CD4-positive, alpha-beta T cell (primary cell): ENCODE measurements at regions of chr6 and their contacts with region 1.

Region 1: DNA sequence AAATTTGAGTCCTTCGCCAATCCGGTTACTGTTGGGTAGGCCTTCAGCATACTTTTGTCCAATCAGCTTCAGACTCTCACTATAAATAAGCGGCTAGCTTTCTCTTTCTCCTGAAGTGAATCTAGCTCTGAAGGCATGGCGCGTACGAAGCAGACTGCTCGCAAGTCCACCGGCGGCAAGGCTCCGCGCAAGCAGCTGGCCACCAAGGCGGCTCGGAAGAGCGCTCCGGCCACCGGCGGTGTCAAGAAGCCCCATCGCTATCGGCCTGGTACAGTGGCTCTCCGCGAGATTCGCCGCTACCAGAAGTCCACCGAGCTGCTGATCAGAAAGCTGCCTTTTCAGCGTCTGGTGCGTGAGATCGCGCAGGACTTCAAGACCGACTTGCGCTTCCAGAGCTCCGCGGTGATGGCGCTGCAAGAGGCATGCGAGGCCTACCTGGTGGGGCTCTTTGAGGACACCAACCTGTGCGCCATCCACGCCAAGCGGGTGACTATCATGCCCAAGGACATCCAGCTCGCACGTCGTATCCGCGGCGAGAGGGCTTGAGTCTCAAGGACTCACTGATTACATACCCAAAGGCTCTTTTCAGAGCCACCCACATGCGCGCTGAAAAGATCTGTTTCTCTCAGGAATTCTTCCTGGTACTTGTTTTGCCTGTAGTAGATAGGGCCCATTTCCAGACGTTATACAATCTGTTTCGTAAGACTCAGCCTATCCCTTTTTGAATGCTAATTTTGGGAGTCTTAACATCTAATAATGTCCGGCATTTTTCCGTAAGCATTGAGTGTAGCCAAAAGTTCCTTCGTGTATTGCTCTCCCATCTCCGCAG is 102.0 kb downstream of the OR2B2 start:
- DNase-seq: peak; percentile 63 to 98 (median 75)
- ATAC-seq: peak; percentile 61
- H3K4me3 ChIP-seq: peak overlapping the region; percentile 64
- H3K4me3 Mint-ChIP-seq: peak overlapping the region; percentile 95
- H3K27ac ChIP-seq: peak overlapping the region; percentile 69 to 81
- H3K27ac Mint-ChIP-seq: peak overlapping the region; percentile 96
- H3K4me1 ChIP-seq: peaks cover 39% of the 10 kb centered on the region
- H3K4me1 Mint-ChIP-seq: peaks cover 68% of the 10 kb centered on the region
- H3K27me3 ChIP-seq: no peaks in the 10 kb centered on the region
- H3K27me3 Mint-ChIP-seq: no peaks in the 10 kb centered on the region
- CTCF ChIP-seq: no peak

Region 2: GRCh38 chr6:26045065-26045927 is 1764.9 kb before region 1 on chr6:
- CTCF ChIA-PET with region 1: no interaction called
- POLR2A ChIA-PET with region 1: interaction called, 28 read pairs
- intact Hi-C with region 1: no loop called
- DNase-seq: peak; percentile 49 to 96 (median 74)
- ATAC-seq: peak; percentile 55
- H3K4me3 ChIP-seq: peak overlapping the region; percentile 70
- H3K4me3 Mint-ChIP-seq: peak overlapping the region; percentile 97
- H3K27ac ChIP-seq: peak overlapping the region; percentile 71 to 91
- H3K27ac Mint-ChIP-seq: peak overlapping the region; percentile 94
- H3K4me1 ChIP-seq: peaks cover 21% of the 10 kb centered on the region
- H3K4me1 Mint-ChIP-seq: peaks cover 28% of the 10 kb centered on the region
- H3K27me3 ChIP-seq: no peaks in the 10 kb centered on the region
- H3K27me3 Mint-ChIP-seq: no peaks in the 10 kb centered on the region
- CTCF ChIP-seq: no peak

Region 3: DNA sequence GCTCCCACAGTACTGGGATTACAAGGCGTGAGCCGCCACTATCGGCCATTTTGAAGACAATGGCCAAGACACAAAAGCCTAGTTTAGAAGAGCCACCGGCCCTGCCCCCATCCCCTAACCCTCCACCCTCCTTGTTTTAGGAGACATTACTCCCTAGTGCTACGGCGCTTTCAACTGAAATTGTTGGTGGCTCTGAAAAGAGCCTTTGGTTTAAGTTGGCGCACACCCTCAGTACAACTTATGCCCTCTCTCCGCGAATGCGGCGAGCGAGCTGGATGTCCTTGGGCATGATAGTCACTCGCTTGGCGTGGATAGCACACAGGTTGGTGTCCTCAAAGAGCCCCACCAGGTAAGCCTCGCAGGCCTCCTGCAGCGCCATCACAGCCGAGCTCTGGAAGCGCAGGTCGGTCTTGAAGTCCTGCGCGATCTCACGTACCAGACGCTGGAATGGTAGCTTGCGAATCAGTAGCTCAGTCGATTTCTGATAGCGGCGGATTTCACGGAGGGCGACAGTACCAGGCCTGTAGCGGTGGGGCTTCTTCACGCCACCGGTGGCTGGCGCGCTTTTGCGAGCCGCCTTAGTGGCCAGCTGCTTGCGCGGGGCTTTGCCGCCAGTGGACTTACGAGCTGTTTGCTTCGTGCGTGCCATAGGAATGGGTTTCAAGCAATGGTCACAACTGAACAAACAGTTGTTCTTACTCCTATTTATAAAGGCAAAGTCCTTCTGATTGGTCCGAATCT is 1560.0 kb before region 1 on chr6:
- CTCF ChIA-PET with region 1: interaction called, 3 read pairs
- POLR2A ChIA-PET with region 1: interaction called, 19 read pairs
- intact Hi-C with region 1: no loop called
- DNase-seq: peak; percentile 64 to 93 (median 74)
- ATAC-seq: peak; percentile 78
- H3K4me3 ChIP-seq: peak overlapping the region; percentile 75
- H3K4me3 Mint-ChIP-seq: peak overlapping the region; percentile 97
- H3K27ac ChIP-seq: peak overlapping the region; percentile 72 to 80
- H3K27ac Mint-ChIP-seq: peak overlapping the region; percentile 88
- H3K4me1 ChIP-seq: peaks cover 29% of the 10 kb centered on the region
- H3K4me1 Mint-ChIP-seq: peaks cover 44% of the 10 kb centered on the region
- H3K27me3 ChIP-seq: no peaks in the 10 kb centered on the region
- H3K27me3 Mint-ChIP-seq: no peaks in the 10 kb centered on the region
- CTCF ChIP-seq: no peak

Region 4: GRCh38 chr6:27479319-27480182 is 330.6 kb before region 1 on chr6:
- CTCF ChIA-PET with region 1: no interaction called
- POLR2A ChIA-PET with region 1: interaction called, 26 read pairs
- intact Hi-C with region 1: no loop called
- DNase-seq: peak; percentile 82 to 94 (median 90)
- ATAC-seq: peak; percentile 71
- H3K4me3 ChIP-seq: peak overlapping the region; percentile 62
- H3K4me3 Mint-ChIP-seq: no peak overlapping the region
- H3K27ac ChIP-seq: peak overlapping the region; percentile 93 to 94
- H3K27ac Mint-ChIP-seq: no peak overlapping the region
- H3K4me1 ChIP-seq: peaks cover 16% of the 10 kb centered on the region
- H3K4me1 Mint-ChIP-seq: peaks cover 3% of the 10 kb centered on the region
- H3K27me3 ChIP-seq: no peaks in the 10 kb centered on the region
- H3K27me3 Mint-ChIP-seq: no peaks in the 10 kb centered on the region
- CTCF ChIP-seq: no peak

Region 5: GRCh38 chr6:27772261-27773001 is 37.7 kb before region 1 on chr6:
- CTCF ChIA-PET with region 1: interaction called, 4 read pairs
- POLR2A ChIA-PET with region 1: interaction called, 10 read pairs
- intact Hi-C with region 1: no loop called
- DNase-seq: peak; percentile 70 to 92 (median 82)
- ATAC-seq: peak; percentile 97
- H3K4me3 ChIP-seq: no peak overlapping the region
- H3K4me3 Mint-ChIP-seq: peak overlapping the region; percentile 36
- H3K27ac ChIP-seq: no peak overlapping the region
- H3K27ac Mint-ChIP-seq: no peak overlapping the region
- H3K4me1 ChIP-seq: peaks cover 9% of the 10 kb centered on the region
- H3K4me1 Mint-ChIP-seq: peaks cover 9% of the 10 kb centered on the region
- H3K27me3 ChIP-seq: peaks cover 0 to 10% of the 10 kb centered on the region in 2 experiments
- H3K27me3 Mint-ChIP-seq: peaks cover 18% of the 10 kb centered on the region
- CTCF ChIP-seq: peak; percentile 90

Region 6: GRCh38 chr6:27864906-27865849 is 55.0 kb after region 1 on chr6:
- CTCF ChIA-PET with region 1: interaction called, 38 read pairs
- POLR2A ChIA-PET with region 1: interaction called, 620 read pairs
- intact Hi-C with region 1: loop called in 1 of 2 experiments (anchors 5 kb)
- DNase-seq: peak in 13 of 14 experiments; percentile 35 to 97 (median 61)
- ATAC-seq: peak; percentile 83
- H3K4me3 ChIP-seq: peak overlapping the region; percentile 59
- H3K4me3 Mint-ChIP-seq: peak overlapping the region; percentile 100
- H3K27ac ChIP-seq: peak overlapping the region; percentile 54 to 78
- H3K27ac Mint-ChIP-seq: peak overlapping the region; percentile 93
- H3K4me1 ChIP-seq: peaks cover 38% of the 10 kb centered on the region
- H3K4me1 Mint-ChIP-seq: peaks cover 41% of the 10 kb centered on the region
- H3K27me3 ChIP-seq: no peaks in the 10 kb centered on the region
- H3K27me3 Mint-ChIP-seq: peaks cover 3% of the 10 kb centered on the region
- CTCF ChIP-seq: no peak

Region 7: DNA sequence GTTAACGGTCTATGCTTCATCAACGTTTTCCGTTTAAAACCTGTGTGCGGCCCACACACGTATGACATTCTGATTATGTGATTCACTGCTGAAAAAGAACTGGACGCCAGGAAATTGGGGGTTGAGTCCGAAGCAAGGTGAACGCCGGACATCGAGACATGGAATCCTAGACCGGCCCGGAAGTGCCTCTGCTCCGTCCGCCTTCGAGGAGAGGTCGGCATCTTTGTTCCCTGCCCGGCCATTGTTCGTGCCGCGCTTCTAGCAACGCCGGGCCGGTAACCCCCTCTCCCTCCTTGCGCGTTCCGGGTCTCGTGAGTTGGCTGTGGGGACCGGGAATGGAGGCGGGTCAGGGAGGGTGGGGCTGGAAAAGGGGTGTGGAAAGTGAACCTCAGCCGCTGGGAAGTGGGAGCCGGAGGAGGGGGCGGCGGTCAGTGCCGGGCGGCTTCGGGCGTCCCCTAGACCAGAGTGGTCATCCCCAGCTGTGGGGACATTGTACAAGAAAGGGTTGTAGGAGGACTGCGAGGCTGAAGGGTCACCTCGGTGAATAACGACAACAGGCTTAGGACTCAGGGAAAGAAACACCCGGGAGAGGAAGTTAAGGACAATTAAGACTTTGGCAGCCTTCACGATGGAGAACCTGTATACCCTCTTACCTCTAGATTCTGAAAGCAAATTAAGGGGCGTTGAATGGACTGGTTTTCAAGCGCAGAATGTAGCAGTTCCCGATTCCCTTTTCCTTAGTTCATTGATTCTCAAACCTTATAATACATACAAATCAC is 415.1 kb after region 1 on chr6 and contains the start of gene ZSCAN9:
- CTCF ChIA-PET with region 1: no interaction called
- POLR2A ChIA-PET with region 1: no interaction called
- intact Hi-C with region 1: no loop called
- DNase-seq: peak in 6 of 14 experiments; percentile 14 to 67 (median 41)
- ATAC-seq: peak; percentile 29
- H3K4me3 ChIP-seq: peak within 1 kb of the TSS; percentile 87
- H3K4me3 Mint-ChIP-seq: peak within 1 kb of the TSS; percentile 88
- H3K27ac ChIP-seq: no peak within 1 kb of the TSS
- H3K27ac Mint-ChIP-seq: no peak within 1 kb of the TSS
- H3K4me1 ChIP-seq: peaks cover 15% of the 10 kb centered on the region
- H3K4me1 Mint-ChIP-seq: peaks cover 15% of the 10 kb centered on the region
- H3K27me3 ChIP-seq: peaks cover 28 to 54% of the 10 kb centered on the region in 2 experiments
- H3K27me3 Mint-ChIP-seq: peaks cover 75% of the 10 kb centered on the region
- CTCF ChIP-seq: no peak
- total RNA-seq, gene ZSCAN9: 0.85 to 0.89 TPM